Activated B cell treated with CpG ODN at 0.5 μM for 24 hours (primary cell): ENCODE measurements at regions of chr20 and their contacts with region 1.

Region 1: GRCh38 chr20:46681032-46681854 is 8.0 kb downstream of the TP53RK start:
- DNase-seq: no peak
- ATAC-seq: peak; percentile 71
- H3K4me3 Mint-ChIP-seq: no peak overlapping the region
- H3K27ac Mint-ChIP-seq: peak overlapping the region; percentile 21
- H3K4me1 Mint-ChIP-seq: peaks cover 42% of the 10 kb centered on the region
- H3K27me3 Mint-ChIP-seq: no peaks in the 10 kb centered on the region
- CTCF ChIP-seq: no peak

Region 2: DNA sequence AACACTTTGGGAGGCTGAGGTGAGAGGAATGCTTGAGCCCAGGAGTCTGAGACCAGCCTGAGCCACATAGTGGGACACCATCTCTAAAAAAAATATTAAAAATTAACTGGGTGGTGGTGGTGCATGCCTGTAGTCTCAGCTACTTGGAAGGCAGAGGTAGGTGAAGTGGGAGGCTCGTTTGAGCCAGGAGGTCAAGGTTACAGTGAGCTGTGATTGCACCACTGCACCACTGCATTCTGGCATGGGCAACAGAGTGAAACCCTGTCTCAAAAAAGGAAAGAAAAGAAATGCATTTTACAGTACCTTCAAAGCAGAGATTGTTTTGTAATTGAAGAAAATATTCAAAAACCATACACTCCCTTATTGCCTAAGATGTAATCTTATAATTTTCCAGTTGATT is 137.3 kb before region 1 on chr20:
- CTCF ChIA-PET with region 1: interaction called, 5 read pairs
- POLR2A ChIA-PET with region 1: interaction called, 21 read pairs
- intact Hi-C with region 1: no loop called
- DNase-seq: no peak
- ATAC-seq: no peak
- H3K4me3 Mint-ChIP-seq: no peak overlapping the region
- H3K27ac Mint-ChIP-seq: no peak overlapping the region
- H3K4me1 Mint-ChIP-seq: peaks cover 8% of the 10 kb centered on the region
- H3K27me3 Mint-ChIP-seq: peaks cover 12% of the 10 kb centered on the region
- CTCF ChIP-seq: no peak

Region 3: GRCh38 chr20:46945465-46945864 is 264.2 kb after region 1 on chr20:
- CTCF ChIA-PET with region 1: no interaction called
- POLR2A ChIA-PET with region 1: no interaction called
- intact Hi-C with region 1: no loop called
- DNase-seq: no peak
- ATAC-seq: no peak
- H3K4me3 Mint-ChIP-seq: no peak overlapping the region
- H3K27ac Mint-ChIP-seq: no peak overlapping the region
- H3K4me1 Mint-ChIP-seq: no peaks in the 10 kb centered on the region
- H3K27me3 Mint-ChIP-seq: no peaks in the 10 kb centered on the region
- CTCF ChIP-seq: no peak